OCI-LY7 (cell line): ENCODE measurements at regions of chr6 and their contacts with region 1.

Region 1: GRCh38 chr6:55069132-55069781 is 105.1 kb upstream of the HCRTR2 start:
- DNase-seq: peak; percentile 14
- H3K4me3 ChIP-seq: no peak overlapping the region
- H3K27ac ChIP-seq: no peak overlapping the region
- H3K4me1 ChIP-seq: no peaks in the 10 kb centered on the region
- CTCF ChIP-seq: peak; percentile 77

Region 2: GRCh38 chr6:53986165-53986720 is 1083.0 kb before region 1 on chr6:
- CTCF ChIA-PET with region 1: no interaction called
- POLR2A ChIA-PET with region 1: no interaction called
- intact Hi-C with region 1: loop called (anchors 10 kb)
- DNase-seq: peak; percentile 9
- H3K4me3 ChIP-seq: no peak overlapping the region
- H3K27ac ChIP-seq: no peak overlapping the region
- H3K4me1 ChIP-seq: no peaks in the 10 kb centered on the region
- CTCF ChIP-seq: peak; percentile 79

Region 3: GRCh38 chr6:54717849-54718455 is 351.3 kb before region 1 on chr6:
- CTCF ChIA-PET with region 1: no interaction called
- POLR2A ChIA-PET with region 1: no interaction called
- intact Hi-C with region 1: loop called (anchors 10 kb)
- DNase-seq: peak; percentile 61
- H3K4me3 ChIP-seq: no peak overlapping the region
- H3K27ac ChIP-seq: no peak overlapping the region
- H3K4me1 ChIP-seq: no peaks in the 10 kb centered on the region
- CTCF ChIP-seq: peak; percentile 87

Region 4: DNA sequence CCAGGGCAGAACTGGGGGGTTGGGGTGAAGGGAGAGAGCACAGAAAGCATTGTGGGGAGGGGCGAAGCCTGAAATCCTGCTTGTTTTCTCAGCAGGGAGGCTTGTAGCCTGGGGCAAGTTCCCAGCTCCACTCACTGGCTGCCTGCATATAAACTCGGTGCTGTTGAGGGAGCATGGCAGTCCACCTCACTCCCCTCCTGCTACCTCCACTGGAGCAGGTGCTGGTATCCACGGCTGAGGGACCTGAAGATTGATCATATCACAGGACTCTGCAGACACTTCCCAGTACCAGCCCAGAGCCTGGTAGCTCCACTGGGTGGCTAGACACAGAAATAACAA is 39.5 kb after region 1 on chr6:
- CTCF ChIA-PET with region 1: no interaction called
- POLR2A ChIA-PET with region 1: no interaction called
- intact Hi-C with region 1: no loop called
- DNase-seq: no peak
- H3K4me3 ChIP-seq: no peak overlapping the region
- H3K27ac ChIP-seq: no peak overlapping the region
- H3K4me1 ChIP-seq: no peaks in the 10 kb centered on the region
- CTCF ChIP-seq: no peak